Activated naive CD4-positive, alpha-beta T cell treated with anti-CD3 and anti-CD28 coated beads for 36 hours (primary cell): ENCODE measurements at regions of chr2 and their contacts with region 1.

Region 1: GRCh38 chr2:46364797-46365457 is 67.7 kb downstream of the EPAS1 start:
- DNase-seq: peak; percentile 57
- H3K4me3 Mint-ChIP-seq: no peak overlapping the region
- H3K27ac Mint-ChIP-seq: no peak overlapping the region
- H3K4me1 Mint-ChIP-seq: peaks cover 23% of the 10 kb centered on the region
- H3K27me3 Mint-ChIP-seq: no peaks in the 10 kb centered on the region

Region 2: DNA sequence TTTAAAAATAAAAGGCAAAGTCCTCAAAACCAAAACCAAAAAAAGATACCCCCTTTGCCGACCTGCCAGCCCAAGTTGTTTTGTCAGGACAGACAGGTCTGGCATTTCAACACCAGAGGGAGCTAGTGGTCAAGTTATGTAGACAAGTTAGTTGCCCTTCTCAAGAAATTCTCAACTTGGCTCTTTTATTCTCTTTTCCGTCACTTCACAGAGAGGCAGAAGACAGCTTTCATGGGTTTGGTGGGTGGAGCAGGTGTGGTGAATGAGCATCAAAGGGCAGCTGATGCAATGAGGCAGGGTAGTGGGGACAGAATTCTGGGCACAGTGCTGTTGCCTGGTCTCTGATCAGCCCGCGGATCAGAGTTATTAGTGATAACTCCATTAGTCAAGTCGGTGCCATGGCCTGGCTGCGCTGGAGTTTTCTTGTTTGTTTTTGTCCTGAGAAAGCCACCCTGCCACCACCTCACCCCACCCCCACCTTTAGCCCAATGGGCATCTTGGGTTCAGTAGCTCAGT is 371.4 kb before region 1 on chr2:
- CTCF ChIA-PET with region 1: interaction called, 7 read pairs
- intact Hi-C with region 1: loop called (anchors 1 kb)
- DNase-seq: peak; percentile 79
- H3K4me3 Mint-ChIP-seq: no peak overlapping the region
- H3K27ac Mint-ChIP-seq: no peak overlapping the region
- H3K4me1 Mint-ChIP-seq: peaks cover 9% of the 10 kb centered on the region
- H3K27me3 Mint-ChIP-seq: no peaks in the 10 kb centered on the region

Region 3: DNA sequence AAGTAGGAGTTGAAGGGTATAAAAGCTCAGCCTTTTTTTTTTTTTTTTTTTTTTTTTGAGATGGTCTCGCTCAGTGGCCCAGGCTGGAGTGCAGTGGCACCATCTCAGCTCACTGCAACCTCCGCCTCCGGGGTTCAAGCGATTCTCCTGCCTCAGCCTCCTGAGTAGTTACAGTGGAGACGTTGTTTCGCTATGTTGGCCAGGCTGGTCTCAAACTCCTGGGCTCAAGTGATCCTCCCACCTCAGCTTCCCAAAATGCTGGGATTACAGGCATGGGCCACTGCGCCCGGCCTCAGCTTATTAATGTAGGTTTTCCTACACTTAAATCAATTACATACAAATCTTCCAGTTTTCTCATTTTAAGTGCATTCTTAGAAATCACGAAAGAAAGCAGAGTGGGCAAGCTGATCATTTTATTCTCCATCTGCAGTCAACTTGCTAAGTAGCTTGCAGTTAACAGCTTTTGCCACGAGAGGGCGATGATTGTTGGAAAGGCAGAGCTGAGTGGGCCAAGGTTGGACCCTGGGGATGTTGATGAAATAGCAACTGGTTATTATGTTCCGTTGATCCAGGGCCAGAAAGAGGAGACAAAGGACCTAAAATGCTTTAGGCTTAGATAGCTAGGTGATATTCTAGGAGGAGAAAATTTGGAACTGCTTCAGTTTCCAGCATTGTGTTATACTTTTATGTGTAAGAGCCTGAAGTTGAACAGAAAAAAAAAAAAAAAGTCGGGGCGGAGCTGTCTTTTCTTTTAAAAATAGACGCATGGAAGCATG is 302.1 kb before region 1 on chr2:
- CTCF ChIA-PET with region 1: interaction called, 20 read pairs
- intact Hi-C with region 1: loop called (anchors 1 kb)
- DNase-seq: peak; percentile 86
- H3K4me3 Mint-ChIP-seq: no peak overlapping the region
- H3K27ac Mint-ChIP-seq: no peak overlapping the region
- H3K4me1 Mint-ChIP-seq: peaks cover 10% of the 10 kb centered on the region
- H3K27me3 Mint-ChIP-seq: no peaks in the 10 kb centered on the region

Region 4: DNA sequence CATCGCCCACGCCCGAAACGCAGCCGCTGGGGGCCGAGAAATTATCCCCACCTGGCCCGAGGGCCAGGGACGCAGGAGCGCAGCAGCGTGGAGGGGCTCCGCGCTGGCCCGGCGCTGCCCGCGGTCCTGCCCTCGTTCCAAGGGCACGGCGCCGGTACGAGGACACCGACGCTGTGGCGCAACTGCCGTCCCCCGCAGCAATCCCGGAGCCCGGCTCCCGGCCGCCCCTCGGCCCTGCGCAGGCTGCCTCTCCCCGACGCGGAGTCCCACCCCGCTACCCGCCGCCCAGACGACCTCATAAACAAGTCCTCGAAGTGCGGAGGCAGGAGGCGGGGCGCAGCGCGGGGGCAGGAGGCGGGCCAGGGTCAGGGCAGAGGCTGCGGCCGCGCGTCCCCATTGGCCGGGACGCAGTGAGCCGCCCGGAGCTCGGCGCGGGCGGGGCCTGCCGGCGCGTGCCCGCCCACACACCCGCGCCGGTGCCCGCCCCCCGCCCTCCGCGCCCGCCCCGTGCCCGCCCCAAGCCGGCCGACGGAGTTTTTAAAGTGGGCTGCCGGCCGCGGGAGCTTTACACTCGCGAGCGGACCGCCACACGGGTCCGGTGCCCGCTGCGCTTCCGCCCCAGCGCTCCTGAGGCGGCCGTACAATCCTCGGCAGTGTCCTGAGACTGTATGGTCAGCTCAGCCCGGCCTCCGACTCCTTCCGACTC is 67.9 kb before region 1 on chr2 and contains the start of gene EPAS1:
- CTCF ChIA-PET with region 1: interaction called, 4 read pairs
- intact Hi-C with region 1: loop called (anchors 1 kb)
- DNase-seq: peak; percentile 84
- H3K4me3 Mint-ChIP-seq: peak within 1 kb of the TSS; percentile 80
- H3K27ac Mint-ChIP-seq: no peak within 1 kb of the TSS
- H3K4me1 Mint-ChIP-seq: peaks cover 15% of the 10 kb centered on the region
- H3K27me3 Mint-ChIP-seq: peaks cover 47% of the 10 kb centered on the region
- total RNA-seq, gene EPAS1: 2.1 to 2.9 TPM

Region 5: GRCh38 chr2:46351750-46352138 is 13.2 kb before region 1 on chr2:
- CTCF ChIA-PET with region 1: interaction called, 5 read pairs
- intact Hi-C with region 1: loop called (anchors 1 kb)
- DNase-seq: peak; percentile 93
- H3K4me3 Mint-ChIP-seq: peak overlapping the region; percentile 81
- H3K27ac Mint-ChIP-seq: peak overlapping the region; percentile 92
- H3K4me1 Mint-ChIP-seq: peaks cover 68% of the 10 kb centered on the region
- H3K27me3 Mint-ChIP-seq: no peaks in the 10 kb centered on the region